Dorsolateral prefrontal cortex (tissue), 120 donors: ENCODE measurements at regions of chr9 and their contacts with region 1.

Region 1: DNA sequence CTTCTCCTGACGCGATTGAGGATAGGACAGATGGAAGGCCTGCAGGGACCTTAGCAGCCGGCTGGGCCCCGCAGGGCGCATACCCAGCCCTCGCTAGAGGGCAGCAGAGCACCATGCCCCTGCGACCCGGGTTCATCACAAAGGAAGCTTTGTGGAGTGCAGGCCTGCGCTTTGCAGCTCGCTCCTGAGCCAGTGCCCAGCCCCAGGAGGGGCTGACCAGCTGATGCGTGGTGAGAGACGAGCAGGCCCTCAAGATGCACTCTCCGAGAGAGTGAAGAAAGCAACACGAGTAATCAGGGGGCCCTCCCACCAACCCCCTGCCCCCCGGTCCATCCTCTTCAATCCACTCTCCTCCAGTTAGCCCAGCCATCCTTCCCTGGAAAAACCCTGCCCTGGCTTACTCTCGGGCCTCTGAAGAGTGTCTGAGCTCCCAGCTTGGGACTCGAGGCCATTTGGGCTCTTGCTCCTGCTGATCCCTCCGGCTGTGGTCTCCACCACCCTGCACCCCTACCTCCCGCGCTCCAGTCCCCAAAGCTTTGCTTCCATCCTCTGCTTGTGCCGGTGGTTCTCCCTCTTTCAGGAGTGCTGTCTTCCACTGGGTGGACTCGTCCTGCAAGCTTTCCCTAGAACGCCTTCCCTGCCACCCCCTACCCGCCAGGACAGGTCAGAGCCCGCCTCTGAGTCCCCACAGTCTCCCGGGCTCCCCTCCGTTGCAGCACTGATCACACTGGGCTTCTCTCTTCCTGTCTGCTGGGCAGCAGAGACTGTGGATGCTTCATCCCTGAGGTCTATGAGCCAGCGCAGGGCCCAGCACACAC is 9.1 kb upstream of the KIF12 start:
- DNase-seq: peak; percentile 48 to 83 (median 74)
- H3K4me3 ChIP-seq: no peak overlapping the region
- H3K27ac ChIP-seq: no peak overlapping the region
- H3K27me3 ChIP-seq: peaks cover 0 to 3% (median 0%) of the 10 kb centered on the region in 45 donors
- CTCF ChIP-seq: peak; percentile 53 to 96 (median 86)

Region 2: GRCh38 chr9:114271641-114272081 is 163.4 kb after region 1 on chr9:
- intact Hi-C with region 1: loop called in 1 of 2 experiments (anchors 5 kb)
- DNase-seq: peak in 4 of 10 donors; percentile 40 to 59 (median 56)
- H3K4me3 ChIP-seq: no peak overlapping the region
- H3K27ac ChIP-seq: no peak overlapping the region
- H3K27me3 ChIP-seq: no peaks in the 10 kb centered on the region
- CTCF ChIP-seq: peak in 54 of 56 donors; percentile 20 to 72 (median 54)

Region 3: GRCh38 chr9:114291064-114291474 is 182.8 kb after region 1 on chr9:
- intact Hi-C with region 1: loop called (anchors 1 to 5 kb)
- DNase-seq: peak; percentile 65 to 84 (median 80)
- H3K4me3 ChIP-seq: no peak overlapping the region
- H3K27ac ChIP-seq: no peak overlapping the region
- H3K27me3 ChIP-seq: no peaks in the 10 kb centered on the region
- CTCF ChIP-seq: peak; percentile 86 to 99 (median 97)